ENCODE measurements at regions of chr11 and their contacts with region 1.

Region 1: DNA sequence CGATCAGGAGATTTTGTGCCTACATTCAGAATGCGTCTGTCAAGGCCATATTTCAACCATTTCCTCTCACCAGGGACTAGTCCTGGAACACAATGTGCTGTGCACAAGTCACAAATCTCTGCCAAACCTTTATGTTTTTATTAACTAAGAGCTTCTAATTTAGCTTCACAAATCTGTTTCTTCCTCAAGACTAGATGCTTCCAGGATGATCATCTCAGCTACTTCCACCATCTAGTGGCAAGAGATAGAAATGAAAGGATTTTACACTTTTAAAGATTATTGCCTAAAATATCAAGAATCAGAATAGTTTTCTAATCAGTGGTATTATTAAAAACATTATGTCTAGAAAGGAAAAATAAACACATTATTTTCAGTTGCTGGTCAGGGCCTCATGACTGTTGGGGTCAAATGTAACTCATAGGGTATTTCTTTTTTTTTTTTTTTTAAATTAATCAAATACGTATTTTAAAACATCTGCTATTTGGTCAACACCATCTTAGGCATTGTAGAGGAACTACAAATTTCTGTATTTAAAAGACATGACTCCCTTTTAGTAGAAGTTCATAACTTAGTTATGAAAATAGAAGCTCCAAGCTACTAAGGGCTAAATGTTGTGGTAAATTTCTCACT is 1102.6 kb downstream of the DLG2 start:
- DNase-seq: peak; percentile 50
- H3K4me3 ChIP-seq: no peak overlapping the region
- H3K27ac ChIP-seq: no peak overlapping the region
- H3K4me1 ChIP-seq: no peaks in the 10 kb centered on the region
- H3K27me3 ChIP-seq: no peaks in the 10 kb centered on the region
- CTCF ChIP-seq: peak; percentile 70

Region 2: GRCh38 chr11:84384731-84385130 is 139.8 kb before region 1 on chr11:
- CTCF ChIA-PET with region 1: interaction called, 8 read pairs
- POLR2A ChIA-PET with region 1: no interaction called
- intact Hi-C with region 1: loop called (anchors 1 kb)
- DNase-seq: peak; percentile 64
- H3K4me3 ChIP-seq: no peak overlapping the region
- H3K27ac ChIP-seq: no peak overlapping the region
- H3K4me1 ChIP-seq: no peaks in the 10 kb centered on the region
- H3K27me3 ChIP-seq: no peaks in the 10 kb centered on the region
- CTCF ChIP-seq: peak; percentile 88

Region 3: GRCh38 chr11:84398017-84398626 is 126.4 kb before region 1 on chr11:
- CTCF ChIA-PET with region 1: interaction called, 7 read pairs
- POLR2A ChIA-PET with region 1: no interaction called
- intact Hi-C with region 1: loop called (anchors 5 kb)
- DNase-seq: peak; percentile 37
- H3K4me3 ChIP-seq: no peak overlapping the region
- H3K27ac ChIP-seq: no peak overlapping the region
- H3K4me1 ChIP-seq: no peaks in the 10 kb centered on the region
- H3K27me3 ChIP-seq: no peaks in the 10 kb centered on the region
- CTCF ChIP-seq: peak; percentile 62

Region 4: GRCh38 chr11:85040166-85040565 is 515.6 kb after region 1 on chr11:
- CTCF ChIA-PET with region 1: no interaction called
- POLR2A ChIA-PET with region 1: no interaction called
- intact Hi-C with region 1: no loop called
- DNase-seq: no peak
- H3K4me3 ChIP-seq: no peak overlapping the region
- H3K27ac ChIP-seq: no peak overlapping the region
- H3K4me1 ChIP-seq: no peaks in the 10 kb centered on the region
- H3K27me3 ChIP-seq: no peaks in the 10 kb centered on the region
- CTCF ChIP-seq: no peak